Breast epithelium (tissue), 4 donors: ENCODE measurements at regions of chr9 and their contacts with region 1.

Region 1: GRCh38 chr9:121299467-121300234 is 31.7 kb downstream of the GSN start:
- DNase-seq: peak; percentile 60 to 68
- H3K4me3 ChIP-seq: peak overlapping the region; percentile 62 to 78 (median 66)
- H3K27ac ChIP-seq: peak overlapping the region; percentile 94 to 98
- H3K4me1 ChIP-seq: peaks cover 23 to 36% of the 10 kb centered on the region in 2 donors
- H3K27me3 ChIP-seq: no peaks in the 10 kb centered on the region
- CTCF ChIP-seq: no peak
- POLR2A ChIP-seq: no peak

Region 2: GRCh38 chr9:121313458-121314152 is 14.0 kb after region 1 on chr9:
- intact Hi-C with region 1: loop called (anchors 1 kb)
- DNase-seq: no peak
- H3K4me3 ChIP-seq: no peak overlapping the region
- H3K27ac ChIP-seq: peak overlapping the region; percentile 45 to 68
- H3K4me1 ChIP-seq: no peaks in the 10 kb centered on the region
- H3K27me3 ChIP-seq: no peaks in the 10 kb centered on the region
- CTCF ChIP-seq: no peak
- POLR2A ChIP-seq: no peak

Region 3: DNA sequence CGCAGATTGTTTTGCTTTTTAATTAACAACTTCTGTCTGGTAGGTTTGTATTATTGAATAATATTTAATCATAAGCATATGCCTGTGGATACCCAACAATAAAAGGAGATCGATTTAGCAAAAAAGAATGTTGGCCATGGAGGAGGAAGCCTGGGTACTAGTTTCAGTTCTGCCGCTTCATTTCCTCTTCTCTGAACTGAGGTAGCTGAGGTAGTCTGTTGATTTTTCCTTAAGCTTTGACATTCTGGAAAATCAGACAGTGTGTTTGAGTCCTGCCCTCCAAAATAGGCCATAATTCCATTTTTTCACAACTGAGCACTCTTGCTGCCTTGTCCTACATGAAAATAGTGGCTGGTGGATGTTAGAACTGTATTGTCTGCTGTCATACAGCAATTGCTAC is 1727.9 kb after region 1 on chr9:
- intact Hi-C with region 1: loop called (anchors 10 kb)
- DNase-seq: no peak
- H3K4me3 ChIP-seq: no peak overlapping the region
- H3K27ac ChIP-seq: no peak overlapping the region
- H3K4me1 ChIP-seq: no peaks in the 10 kb centered on the region
- H3K27me3 ChIP-seq: no peaks in the 10 kb centered on the region
- CTCF ChIP-seq: no peak
- POLR2A ChIP-seq: no peak